Activated CD4-positive, alpha-beta T cell treated with anti-CD3 and anti-CD28 coated beads, Interleukin-2, amount 10 ng/mL, durations not matched to agents 24 days and 14 days (primary cell): ENCODE measurements at regions of chr16 and their contacts with region 1.

Region 1: GRCh38 chr16:56681939-56682702 is at the start of gene MT1X:
- DNase-seq: peak; percentile 97
- H3K4me3 Mint-ChIP-seq: peak within 1 kb of the TSS; percentile 94
- H3K27ac Mint-ChIP-seq: peak within 1 kb of the TSS; percentile 93
- H3K4me1 Mint-ChIP-seq: peaks cover 21% of the 10 kb centered on the region
- H3K27me3 Mint-ChIP-seq: no peaks in the 10 kb centered on the region
- total RNA-seq, gene MT1X: 62.7 and 66.9 TPM in 2 replicates

Region 2: GRCh38 chr16:56643080-56643778 is 38.9 kb before region 1 on chr16:
- intact Hi-C with region 1: loop called (anchors 2 kb)
- DNase-seq: peak; percentile 94
- H3K4me3 Mint-ChIP-seq: peak overlapping the region; percentile 81
- H3K27ac Mint-ChIP-seq: peak overlapping the region; percentile 53
- H3K4me1 Mint-ChIP-seq: peaks cover 22% of the 10 kb centered on the region
- H3K27me3 Mint-ChIP-seq: peaks cover 61% of the 10 kb centered on the region

Region 3: DNA sequence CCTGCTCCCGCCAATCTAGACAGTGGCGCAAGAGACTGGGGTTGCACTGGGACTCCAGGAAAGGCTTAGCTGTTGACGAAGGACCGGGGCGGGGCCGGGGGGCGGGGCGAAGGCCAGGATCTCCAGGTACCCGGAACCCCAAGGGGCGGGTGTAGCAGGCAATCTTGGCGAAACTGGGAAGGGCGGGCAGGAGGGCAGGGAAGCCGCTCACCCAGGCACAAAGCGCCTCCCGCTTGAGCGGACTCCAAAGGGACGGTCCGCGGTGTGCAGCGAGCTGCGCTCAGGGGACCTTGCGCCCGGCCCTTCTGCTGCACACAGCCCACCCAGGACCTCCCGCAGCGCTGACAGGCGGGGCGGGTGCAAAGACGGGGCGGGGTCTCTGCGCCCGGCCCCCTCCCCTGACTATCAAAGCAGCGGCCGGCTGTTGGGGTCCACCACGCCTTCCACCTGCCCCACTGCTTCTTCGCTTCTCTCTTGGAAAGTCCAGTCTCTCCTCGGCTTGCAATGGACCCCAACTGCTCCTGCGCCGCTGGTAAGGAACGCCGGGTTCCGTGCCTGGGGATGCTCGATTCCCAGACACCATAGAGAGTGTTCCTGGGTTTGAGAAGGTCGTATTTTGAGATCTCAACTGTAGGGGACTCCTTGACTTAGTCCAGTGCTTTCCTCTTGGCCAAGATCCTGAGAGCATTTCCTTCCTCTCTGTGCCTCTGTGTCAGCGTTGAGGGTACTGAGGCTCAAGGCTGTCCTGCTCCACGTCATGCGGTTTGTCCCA is 24.4 kb before region 1 on chr16 and contains the start of gene MT1F:
- intact Hi-C with region 1: loop called (anchors 2 kb)
- DNase-seq: peak; percentile 87
- H3K4me3 Mint-ChIP-seq: peak within 1 kb of the TSS; percentile 92
- H3K27ac Mint-ChIP-seq: peak within 1 kb of the TSS; percentile 85
- H3K4me1 Mint-ChIP-seq: peaks cover 18% of the 10 kb centered on the region
- H3K27me3 Mint-ChIP-seq: peaks cover 14% of the 10 kb centered on the region
- total RNA-seq, gene MT1F: 4.2 and 6.7 TPM in 2 replicates

Region 4: DNA sequence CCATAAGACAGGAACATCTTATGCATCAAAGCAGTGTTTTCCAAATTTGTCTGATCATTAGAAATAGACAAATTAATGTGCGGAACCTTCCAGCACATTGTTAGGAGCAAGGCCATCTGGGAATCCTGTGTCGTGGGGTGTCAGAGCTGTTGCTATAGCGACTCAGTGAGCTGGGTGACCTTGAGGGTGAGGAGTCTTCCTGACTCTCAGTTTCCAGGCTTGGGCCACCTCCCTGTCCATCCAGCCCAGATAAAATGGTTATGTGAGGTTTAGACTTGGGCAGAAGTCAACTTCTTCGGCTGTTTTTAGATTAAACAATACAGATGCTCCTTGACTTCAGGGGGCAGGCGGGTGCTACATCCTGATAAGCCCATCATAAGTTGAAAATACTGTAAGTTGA is 20.7 kb after region 1 on chr16:
- intact Hi-C with region 1: loop called (anchors 1 kb)
- DNase-seq: no peak
- H3K4me3 Mint-ChIP-seq: no peak overlapping the region
- H3K27ac Mint-ChIP-seq: no peak overlapping the region
- H3K4me1 Mint-ChIP-seq: peaks cover 14% of the 10 kb centered on the region
- H3K27me3 Mint-ChIP-seq: peaks cover 2% of the 10 kb centered on the region